Calu3 (cell line): ENCODE measurements at regions of chr10 and their contacts with region 1.

Region 1: DNA sequence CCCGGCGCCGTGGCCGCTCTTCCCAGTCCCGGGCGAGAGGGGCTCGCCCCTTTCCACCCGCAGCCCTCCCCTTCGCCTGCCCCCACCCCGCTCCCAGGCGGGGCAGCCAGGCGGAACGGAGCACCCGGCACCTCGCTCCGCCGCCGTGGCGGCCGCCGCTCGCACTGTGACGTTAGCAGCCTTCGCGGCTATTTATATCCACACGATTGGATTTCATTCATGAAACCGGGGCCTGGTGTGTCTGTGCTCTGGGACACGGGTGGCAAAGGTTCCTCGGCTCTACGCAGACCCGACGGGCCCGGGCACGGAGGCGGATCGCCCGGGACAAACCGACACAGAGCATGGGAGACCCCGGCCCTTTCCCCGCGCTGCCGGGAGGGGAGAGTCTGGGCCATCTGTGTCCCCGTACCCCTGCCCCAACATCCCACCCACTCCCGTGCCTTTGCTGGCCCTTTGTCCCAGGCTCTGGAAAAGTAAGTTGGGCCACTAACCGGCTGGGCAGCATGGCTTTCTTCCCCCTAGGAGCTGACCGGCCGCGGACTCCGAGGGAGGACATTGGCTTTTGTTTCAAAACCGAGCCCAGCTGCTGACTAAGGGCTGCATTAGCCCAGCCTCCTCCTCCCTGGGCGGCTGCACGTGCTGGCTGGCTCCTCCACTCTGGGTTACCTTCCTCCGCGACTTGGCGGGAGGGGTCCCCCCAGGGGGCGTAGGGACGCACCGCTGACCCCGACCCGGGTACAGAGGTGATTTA is at the start of gene RHOBTB1:
- DNase-seq: peak; percentile 81
- H3K4me3 Mint-ChIP-seq: peak within 1 kb of the TSS; percentile 90
- H3K27ac Mint-ChIP-seq: peak within 1 kb of the TSS; percentile 90
- H3K4me1 Mint-ChIP-seq: peaks cover 13% of the 10 kb centered on the region
- H3K27me3 Mint-ChIP-seq: no peaks in the 10 kb centered on the region
- CTCF ChIP-seq: no peak
- total RNA-seq, gene RHOBTB1: 9.8 and 10.2 TPM in 2 replicates

Region 2: GRCh38 chr10:60883187-60883586 is 61.1 kb before region 1 on chr10:
- CTCF ChIA-PET with region 1: no interaction called
- intact Hi-C with region 1: loop called (anchors 5 kb)
- DNase-seq: peak; percentile 51
- H3K4me3 Mint-ChIP-seq: no peak overlapping the region
- H3K27ac Mint-ChIP-seq: no peak overlapping the region
- H3K4me1 Mint-ChIP-seq: no peaks in the 10 kb centered on the region
- H3K27me3 Mint-ChIP-seq: no peaks in the 10 kb centered on the region
- CTCF ChIP-seq: peak; percentile 56

Region 3: GRCh38 chr10:61078542-61079275 is 134.4 kb after region 1 on chr10:
- CTCF ChIA-PET with region 1: no interaction called
- intact Hi-C with region 1: no loop called
- DNase-seq: no peak
- H3K4me3 Mint-ChIP-seq: no peak overlapping the region
- H3K27ac Mint-ChIP-seq: no peak overlapping the region
- H3K4me1 Mint-ChIP-seq: no peaks in the 10 kb centered on the region
- H3K27me3 Mint-ChIP-seq: no peaks in the 10 kb centered on the region
- CTCF ChIP-seq: no peak